A549 (cell line): ENCODE measurements at regions of chr2 and their contacts with region 1.

Region 1: GRCh38 chr2:187499941-187500532 is 52.0 kb upstream of the CALCRL start:
- DNase-seq: peak; percentile 19 to 74
- ATAC-seq: peak in 1 of 2 experiments; percentile 67; a peak in 3 of 6 replicates
- H3K4me3 ChIP-seq: no peak overlapping the region
- H3K27ac ChIP-seq: peak overlapping the region in 1 of 2 experiments; percentile 75; a peak in 3 of 6 replicates
- H3K4me1 ChIP-seq: peaks cover 52% of the 10 kb centered on the region
- CTCF ChIP-seq: peak; percentile 98
- EP300 ChIP-seq: no peak
- POLR2A ChIP-seq: no peak
- RAD21 ChIP-seq: peak; percentile 99 to 100

Region 2: GRCh38 chr2:187461294-187462261 is 38.5 kb before region 1 on chr2:
- CTCF ChIA-PET with region 1: no interaction called
- POLR2A ChIA-PET with region 1: no interaction called
- DNase-seq: no peak
- ATAC-seq: peak; percentile 36 to 39; a peak in 4 of 6 replicates
- H3K4me3 ChIP-seq: no peak overlapping the region
- H3K27ac ChIP-seq: no peak overlapping the region
- H3K4me1 ChIP-seq: no peaks in the 10 kb centered on the region
- CTCF ChIP-seq: no peak
- EP300 ChIP-seq: no peak
- POLR2A ChIP-seq: no peak
- RAD21 ChIP-seq: no peak

Region 3: GRCh38 chr2:187527262-187527661 is 27.2 kb after region 1 on chr2:
- CTCF ChIA-PET with region 1: interaction called, 10 read pairs
- POLR2A ChIA-PET with region 1: interaction called, 4 read pairs
- DNase-seq: peak in 1 of 2 experiments; percentile 81
- ATAC-seq: peak in 1 of 2 experiments; percentile 39; a peak in 3 of 6 replicates
- H3K4me3 ChIP-seq: no peak overlapping the region
- H3K27ac ChIP-seq: peak overlapping the region; percentile 67 to 75
- H3K4me1 ChIP-seq: peaks cover 61% of the 10 kb centered on the region
- CTCF ChIP-seq: no peak
- EP300 ChIP-seq: peak; percentile 47 to 52; a peak in 2 of 5 replicates
- POLR2A ChIP-seq: no peak
- RAD21 ChIP-seq: no peak

Region 4: GRCh38 chr2:187547353-187547979 is 47.4 kb after region 1 on chr2:
- CTCF ChIA-PET with region 1: interaction called, 56 read pairs
- POLR2A ChIA-PET with region 1: interaction called, 5 read pairs
- DNase-seq: peak; percentile 18 to 96
- ATAC-seq: peak; percentile 87 to 97
- H3K4me3 ChIP-seq: no peak overlapping the region
- H3K27ac ChIP-seq: peak overlapping the region; percentile 89 to 92
- H3K4me1 ChIP-seq: peaks cover 86% of the 10 kb centered on the region
- CTCF ChIP-seq: no peak
- EP300 ChIP-seq: peak; percentile 56 to 76; a peak in 2 of 5 replicates
- POLR2A ChIP-seq: no peak
- RAD21 ChIP-seq: peak in 1 of 2 experiments; percentile 31; a peak in 2 of 5 replicates

Region 5: GRCh38 chr2:187567126-187567525 is 67.1 kb after region 1 on chr2:
- CTCF ChIA-PET with region 1: interaction called, 324 read pairs
- POLR2A ChIA-PET with region 1: no interaction called
- DNase-seq: no peak
- ATAC-seq: peak; percentile 82 to 83; a peak in 5 of 6 replicates
- H3K4me3 ChIP-seq: no peak overlapping the region
- H3K27ac ChIP-seq: peak overlapping the region in 1 of 2 experiments; percentile 40; a peak in 1 of 6 replicates
- H3K4me1 ChIP-seq: peaks cover 38% of the 10 kb centered on the region
- CTCF ChIP-seq: no peak
- EP300 ChIP-seq: no peak
- POLR2A ChIP-seq: no peak
- RAD21 ChIP-seq: no peak

Region 6: DNA sequence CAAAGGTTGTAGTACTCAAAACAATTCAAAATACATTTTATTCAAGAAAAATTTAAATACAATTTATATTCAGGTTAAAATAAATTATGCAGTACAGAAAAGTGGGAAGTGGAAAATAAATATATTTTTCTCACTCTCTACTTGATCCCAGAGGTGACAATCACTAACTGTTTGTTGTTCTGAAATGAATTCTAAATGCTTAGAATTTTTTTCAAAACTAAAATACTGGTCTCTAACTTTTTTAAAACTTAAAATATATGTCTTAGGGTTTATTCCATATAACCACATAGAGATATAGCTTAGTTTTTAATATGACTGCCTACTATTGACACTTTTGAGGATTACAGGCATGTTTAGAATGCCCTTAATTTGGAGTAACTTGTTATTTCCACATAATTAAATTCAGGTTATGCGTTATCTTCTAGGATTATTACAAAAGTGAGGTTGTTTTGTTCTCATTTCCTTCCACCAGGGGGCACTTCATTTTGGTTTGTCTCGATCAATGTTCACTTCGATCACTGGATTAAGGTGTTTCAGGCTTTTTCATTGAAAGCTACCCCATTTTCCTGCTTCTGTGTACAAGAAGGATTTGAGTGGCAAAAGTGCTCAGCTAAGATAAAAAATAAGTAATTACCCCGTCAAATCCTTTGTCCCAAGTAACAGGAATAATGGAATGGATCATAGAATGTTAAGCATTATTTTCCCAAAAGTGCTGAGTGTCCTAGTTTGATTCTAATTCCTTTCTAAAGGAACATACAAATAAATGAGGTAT is 81.3 kb after region 1 on chr2:
- CTCF ChIA-PET with region 1: interaction called, 324 read pairs
- POLR2A ChIA-PET with region 1: interaction called, 7 read pairs
- DNase-seq: peak; percentile 4 to 62
- ATAC-seq: peak in 1 of 2 experiments; percentile 46; a peak in 3 of 6 replicates
- H3K4me3 ChIP-seq: peak overlapping the region; percentile 6; the same call in 1 of the 3 replicates
- H3K27ac ChIP-seq: peak overlapping the region; percentile 69 to 72; a peak in 5 of 6 replicates
- H3K4me1 ChIP-seq: peaks cover 25% of the 10 kb centered on the region
- CTCF ChIP-seq: peak; percentile 80
- EP300 ChIP-seq: no peak
- POLR2A ChIP-seq: no peak
- RAD21 ChIP-seq: peak; percentile 51 to 61

Region 7: GRCh38 chr2:189412330-189412953 is 1912.4 kb after region 1 on chr2:
- CTCF ChIA-PET with region 1: interaction called, 10 read pairs
- POLR2A ChIA-PET with region 1: no interaction called
- DNase-seq: peak; percentile 12 to 53
- ATAC-seq: peak in 1 of 2 experiments; percentile 77; a peak in 3 of 6 replicates
- H3K4me3 ChIP-seq: no peak overlapping the region
- H3K27ac ChIP-seq: peak overlapping the region; percentile 61 to 66; a peak in 4 of 6 replicates
- H3K4me1 ChIP-seq: peaks cover 33% of the 10 kb centered on the region
- CTCF ChIP-seq: peak; percentile 94
- EP300 ChIP-seq: no peak
- POLR2A ChIP-seq: no peak
- RAD21 ChIP-seq: peak; percentile 95 to 97